Ascending aorta (tissue), 2 donors: ENCODE measurements at regions of chr3 and their contacts with region 1.

Region 1: DNA sequence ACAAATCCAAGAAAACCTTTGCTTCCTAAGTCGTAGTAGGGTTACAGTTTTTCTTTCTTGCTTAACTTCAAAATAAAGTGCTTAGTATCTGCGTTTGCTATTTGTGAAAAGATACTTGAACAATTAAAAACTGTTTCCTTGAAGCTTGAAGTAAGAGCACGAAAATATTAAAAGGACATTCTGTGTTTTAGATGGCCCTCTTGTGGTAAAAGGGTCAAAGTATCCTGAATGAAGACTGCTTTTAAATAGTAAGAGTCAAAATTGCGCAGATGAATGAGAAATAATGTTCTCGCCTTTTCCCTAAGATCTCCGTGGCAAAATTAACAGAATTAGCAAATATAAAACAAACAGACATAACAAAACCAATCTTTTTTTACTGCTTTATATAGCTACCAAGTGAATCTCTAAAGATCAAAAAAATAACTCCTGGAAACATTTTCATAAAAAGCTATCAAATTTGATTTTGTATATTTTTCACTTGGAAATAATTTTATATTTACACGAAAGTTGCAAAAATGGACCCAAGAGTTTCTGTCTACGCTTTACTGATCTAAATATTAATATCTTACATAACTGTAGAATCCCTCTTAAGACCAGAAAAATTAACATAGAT is 175.4 kb downstream of the MBNL1 start:
- DNase-seq: no peak
- H3K4me3 ChIP-seq: peak overlapping the region in 1 of 2 donors; percentile 24
- H3K27ac ChIP-seq: peak overlapping the region; percentile 32 to 43
- H3K4me1 ChIP-seq: peaks cover 3 to 56% of the 10 kb centered on the region in 2 donors
- H3K27me3 ChIP-seq: no peaks in the 10 kb centered on the region
- CTCF ChIP-seq: peak; percentile 42 to 65 (median 47)

Region 2: DNA sequence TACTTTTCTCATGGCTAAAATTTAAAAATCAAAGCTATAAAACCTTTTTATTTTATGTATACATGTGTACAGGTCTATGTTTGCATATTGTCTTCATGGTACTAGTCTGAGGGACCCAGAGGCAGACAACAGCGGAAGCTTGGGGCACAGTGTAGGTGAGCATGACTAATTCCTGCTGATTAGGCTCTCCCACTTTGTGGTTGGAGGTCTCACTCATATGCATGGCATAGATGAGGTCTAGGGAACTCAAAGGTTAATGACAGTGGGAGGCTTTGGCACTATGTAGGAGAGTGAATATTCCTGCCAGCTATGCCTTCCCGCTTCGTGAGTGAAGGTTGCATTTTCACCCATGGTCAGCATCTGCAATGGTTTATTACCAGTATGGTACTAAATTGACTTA is 757.9 kb before region 1 on chr3:
- intact Hi-C with region 1: no loop called
- DNase-seq: no peak
- H3K4me3 ChIP-seq: no peak overlapping the region
- H3K27ac ChIP-seq: no peak overlapping the region
- H3K4me1 ChIP-seq: peaks cover 0 to 11% of the 10 kb centered on the region in 2 donors
- H3K27me3 ChIP-seq: no peaks in the 10 kb centered on the region
- CTCF ChIP-seq: no peak

Region 3: DNA sequence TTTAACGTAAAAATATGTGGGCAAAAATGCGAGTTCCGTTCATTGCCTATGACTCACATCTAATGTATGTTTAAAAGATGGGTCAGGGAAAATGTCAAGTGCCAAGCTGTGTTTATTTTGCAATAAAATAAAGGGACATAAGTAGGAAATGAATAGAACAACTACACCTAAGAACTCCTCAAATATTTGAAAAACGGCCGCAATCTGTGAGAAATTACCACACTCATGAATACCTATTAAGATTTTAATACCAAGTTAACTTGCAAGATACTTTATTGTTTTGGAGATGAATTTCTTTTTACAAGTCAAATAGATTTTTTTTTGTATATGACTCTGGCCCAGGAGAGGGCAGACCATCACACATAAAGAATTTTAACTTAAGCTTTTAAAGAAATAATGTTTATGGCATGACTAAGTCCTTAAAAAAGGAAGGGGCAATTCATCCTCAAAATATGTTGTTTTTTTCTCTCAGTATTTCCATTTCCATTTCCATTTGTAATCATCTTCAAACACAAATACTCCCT is 418.0 kb before region 1 on chr3:
- intact Hi-C with region 1: loop called (anchors 5 kb)
- DNase-seq: no peak
- H3K4me3 ChIP-seq: no peak overlapping the region
- H3K27ac ChIP-seq: no peak overlapping the region
- H3K4me1 ChIP-seq: peaks cover 0 to 11% of the 10 kb centered on the region in 2 donors
- H3K27me3 ChIP-seq: no peaks in the 10 kb centered on the region
- CTCF ChIP-seq: peak in 2 of 3 experiments; percentile 39 to 43

Region 4: GRCh38 chr3:152298393-152299242 is 145.5 kb before region 1 on chr3:
- intact Hi-C with region 1: loop called (anchors 10 kb)
- DNase-seq: peak in 1 of 2 donors; percentile 84
- H3K4me3 ChIP-seq: peak overlapping the region; percentile 49 to 52
- H3K27ac ChIP-seq: peak overlapping the region; percentile 77 to 83
- H3K4me1 ChIP-seq: peaks cover 8 to 51% of the 10 kb centered on the region in 2 donors
- H3K27me3 ChIP-seq: no peaks in the 10 kb centered on the region
- CTCF ChIP-seq: no peak

Region 5: GRCh38 chr3:152322756-152323155 is 121.4 kb before region 1 on chr3:
- intact Hi-C with region 1: no loop called
- DNase-seq: no peak
- H3K4me3 ChIP-seq: peak overlapping the region in 1 of 2 donors; percentile 23
- H3K27ac ChIP-seq: peak overlapping the region; percentile 78 to 81
- H3K4me1 ChIP-seq: peaks cover 10 to 64% of the 10 kb centered on the region in 2 donors
- H3K27me3 ChIP-seq: no peaks in the 10 kb centered on the region
- CTCF ChIP-seq: no peak